Stomach (tissue), 19 donors: ENCODE measurements at regions of chr12 and their contacts with region 1.

Region 1: DNA sequence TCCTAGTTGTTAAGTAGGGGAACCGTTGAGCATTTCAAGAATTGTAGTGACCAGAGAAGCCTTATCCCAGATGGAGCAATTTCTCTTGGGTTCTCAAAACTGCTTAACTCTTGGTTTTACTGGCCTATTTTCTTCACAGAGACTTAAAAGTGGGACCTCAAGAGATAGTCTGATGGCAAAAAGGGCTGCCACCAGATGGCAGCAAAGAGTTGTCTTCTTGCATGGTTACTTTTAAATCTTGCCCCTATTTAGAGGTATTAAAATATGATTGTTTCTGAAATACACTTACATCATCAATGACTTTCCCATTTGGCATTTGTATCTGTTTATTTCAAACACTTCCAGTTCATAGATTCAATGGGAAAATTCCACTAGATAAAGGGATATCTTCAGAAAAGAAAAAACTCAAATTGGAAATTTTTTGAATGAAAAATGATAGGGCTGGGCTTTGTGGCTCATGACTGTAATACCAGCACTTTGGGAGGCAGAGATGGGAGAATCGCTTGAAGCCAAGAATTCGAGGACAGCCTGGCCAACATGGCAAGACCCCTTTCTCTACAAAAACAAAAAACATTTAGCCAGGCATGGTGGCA is 69.9 kb upstream of the CNTN1 start:
- DNase-seq: peak; percentile 55 to 78
- H3K4me3 ChIP-seq: no peak overlapping the region
- H3K27ac ChIP-seq: no peak overlapping the region
- H3K4me1 ChIP-seq: no peaks in the 10 kb centered on the region
- H3K27me3 ChIP-seq: no peaks in the 10 kb centered on the region
- CTCF ChIP-seq: peak in 5 of 7 experiments; percentile 13 to 76 (median 39)
- EP300 ChIP-seq: no peak
- POLR2A ChIP-seq: no peak

Region 2: GRCh38 chr12:40921563-40922163 is 299.3 kb after region 1 on chr12:
- intact Hi-C with region 1: loop called (anchors 5 kb)
- DNase-seq: peak in 1 of 2 donors; percentile 30
- H3K4me3 ChIP-seq: no peak overlapping the region
- H3K27ac ChIP-seq: no peak overlapping the region
- H3K4me1 ChIP-seq: no peaks in the 10 kb centered on the region
- H3K27me3 ChIP-seq: no peaks in the 10 kb centered on the region
- CTCF ChIP-seq: peak in 5 of 7 experiments; percentile 10 to 71 (median 49)
- EP300 ChIP-seq: no peak
- POLR2A ChIP-seq: no peak